Activated CD4-positive, alpha-beta T cell treated with anti-CD3 and anti-CD28 coated beads for 36 hours (primary cell): ENCODE measurements at regions of chr1 and their contacts with region 1.

Region 1: DNA sequence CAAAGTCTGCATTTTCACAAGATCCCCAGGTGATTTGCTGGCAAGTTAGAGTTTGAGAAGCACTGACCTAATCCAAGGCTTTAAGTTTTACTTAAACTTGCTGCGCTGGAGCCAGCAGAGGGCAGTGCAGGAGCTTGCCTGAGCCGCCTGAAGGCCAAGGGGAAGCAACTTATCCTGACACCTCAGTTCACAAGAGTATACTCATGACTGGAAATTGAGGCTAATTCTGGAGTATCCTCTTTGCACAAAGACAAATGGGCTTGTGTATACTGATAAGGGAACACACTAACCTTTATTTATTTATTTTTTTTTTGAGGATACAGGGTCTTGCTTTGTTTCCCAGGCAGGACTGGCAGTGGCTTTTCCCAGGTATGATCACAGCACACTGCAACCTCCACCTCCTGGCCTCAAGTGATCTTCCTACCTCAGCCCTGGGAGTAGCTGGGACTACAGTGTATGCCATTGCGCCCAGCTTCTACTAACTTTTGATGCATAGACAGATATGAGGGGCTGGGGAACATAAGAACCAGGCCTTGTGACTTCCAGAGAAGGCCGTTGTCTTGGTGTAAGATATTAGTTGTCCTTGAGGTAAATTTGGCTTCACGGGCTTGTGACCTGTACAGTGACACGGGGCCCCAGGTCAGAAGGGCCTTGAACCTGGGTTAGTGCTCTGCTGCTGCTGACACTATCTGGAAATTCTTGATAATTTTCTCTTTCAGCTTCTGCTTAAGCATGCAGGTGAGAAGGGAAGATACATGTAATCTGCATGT is 29.0 kb upstream of the SLAMF1 start:
- DNase-seq: peak; percentile 89
- ATAC-seq: peak; percentile 70
- H3K4me3 Mint-ChIP-seq: peak overlapping the region; percentile 26
- H3K27ac Mint-ChIP-seq: peak overlapping the region; percentile 48
- H3K4me1 Mint-ChIP-seq: peaks cover 42% of the 10 kb centered on the region
- H3K27me3 Mint-ChIP-seq: no peaks in the 10 kb centered on the region

Region 2: DNA sequence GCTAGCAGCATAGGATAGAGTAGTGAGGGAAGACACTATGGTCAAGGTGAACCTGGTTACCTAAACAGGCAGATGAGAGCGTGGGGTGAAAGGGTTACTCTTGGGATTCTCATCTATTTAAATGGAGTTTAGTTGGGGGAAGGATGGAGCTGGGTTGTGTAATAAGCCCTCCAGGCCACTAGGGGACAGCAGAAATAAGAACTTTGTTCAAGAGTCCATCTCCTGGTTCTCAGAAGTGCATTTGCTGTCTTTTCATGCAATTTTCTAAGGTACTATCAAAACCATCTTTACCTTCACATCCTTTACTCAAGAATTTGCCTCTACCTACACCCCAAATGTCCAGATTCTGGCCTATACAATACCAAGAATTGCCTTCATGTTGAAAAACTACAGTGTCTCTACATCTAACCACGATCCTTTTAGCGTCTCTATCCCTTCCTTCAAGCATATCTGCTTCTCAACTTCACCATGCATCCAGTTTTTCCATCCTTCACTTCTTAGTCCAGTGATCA is 57.0 kb before region 1 on chr1:
- CTCF ChIA-PET with region 1: interaction called, 65 read pairs
- POLR2A ChIA-PET with region 1: interaction called, 6 read pairs
- intact Hi-C with region 1: loop called (anchors 1 to 2 kb)
- DNase-seq: peak; percentile 65
- ATAC-seq: no peak
- H3K4me3 Mint-ChIP-seq: no peak overlapping the region
- H3K27ac Mint-ChIP-seq: peak overlapping the region; percentile 71
- H3K4me1 Mint-ChIP-seq: peaks cover 60% of the 10 kb centered on the region
- H3K27me3 Mint-ChIP-seq: no peaks in the 10 kb centered on the region

Region 3: DNA sequence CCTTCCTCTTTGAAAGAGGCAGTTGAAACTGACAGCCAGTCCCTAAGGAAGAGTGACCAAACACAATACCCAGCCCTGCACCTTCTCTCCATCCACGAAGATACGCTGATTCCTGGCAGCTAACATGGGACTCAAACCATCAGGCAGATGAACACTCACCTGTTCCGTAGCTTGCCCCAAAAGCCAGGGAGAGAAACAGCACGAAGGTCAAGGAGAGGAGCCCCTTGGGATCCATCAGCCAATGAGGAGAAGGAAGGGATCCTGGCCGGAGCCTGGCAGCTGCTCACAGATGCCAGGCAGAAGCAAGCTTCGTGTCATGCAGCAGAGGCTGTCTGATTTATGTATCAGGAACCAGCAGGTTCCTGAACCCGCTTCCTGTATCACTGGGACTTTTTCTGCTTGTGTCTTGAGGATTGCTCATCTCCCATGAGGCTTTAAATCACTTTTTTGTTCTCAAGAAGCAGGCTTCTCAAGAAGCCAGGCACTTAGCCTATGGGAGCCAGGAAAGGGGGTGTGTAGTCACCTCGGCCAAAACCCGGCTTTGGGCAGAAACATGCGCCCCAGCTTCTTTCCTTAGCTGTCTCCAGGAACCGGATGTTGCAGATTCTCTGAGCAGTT is 29.0 kb before region 1 on chr1 and contains the start of gene SLAMF1:
- CTCF ChIA-PET with region 1: interaction called, 61 read pairs
- POLR2A ChIA-PET with region 1: interaction called, 9 read pairs
- intact Hi-C with region 1: loop called (anchors 1 to 2 kb)
- DNase-seq: peak; percentile 81
- ATAC-seq: peak; percentile 81
- H3K4me3 Mint-ChIP-seq: peak within 1 kb of the TSS; percentile 93
- H3K27ac Mint-ChIP-seq: peak within 1 kb of the TSS; percentile 92
- H3K4me1 Mint-ChIP-seq: peaks cover 56% of the 10 kb centered on the region
- H3K27me3 Mint-ChIP-seq: no peaks in the 10 kb centered on the region
- total RNA-seq, gene SLAMF1: 103 to 108 TPM

Region 4: DNA sequence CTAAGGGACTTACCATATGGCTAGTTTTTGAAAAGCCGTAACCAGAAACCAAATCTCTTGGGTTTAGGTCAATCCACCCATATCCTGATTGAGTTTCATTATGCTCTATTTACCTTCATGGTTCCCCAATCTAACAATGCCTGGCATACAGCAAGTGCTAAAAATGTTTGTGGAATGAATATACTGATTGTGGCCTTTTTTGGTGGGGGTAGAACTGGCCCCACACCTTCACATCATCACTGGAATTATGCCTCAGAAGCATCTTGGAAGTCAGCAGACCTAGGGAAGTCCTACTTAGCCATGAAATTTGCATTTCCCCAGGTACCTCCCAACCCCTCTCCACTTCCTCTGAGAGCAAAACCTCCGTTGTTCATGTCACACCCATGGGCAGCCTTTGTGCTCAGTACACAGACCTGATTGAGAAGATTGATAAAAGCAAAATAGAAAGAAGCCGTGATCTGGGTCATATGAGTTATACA is 11.2 kb before region 1 on chr1:
- CTCF ChIA-PET with region 1: interaction called, 18 read pairs
- POLR2A ChIA-PET with region 1: interaction called, 4 read pairs
- intact Hi-C with region 1: no loop called
- DNase-seq: peak; percentile 55
- ATAC-seq: peak; percentile 79
- H3K4me3 Mint-ChIP-seq: peak overlapping the region; percentile 40
- H3K27ac Mint-ChIP-seq: peak overlapping the region; percentile 89
- H3K4me1 Mint-ChIP-seq: peaks cover 70% of the 10 kb centered on the region
- H3K27me3 Mint-ChIP-seq: no peaks in the 10 kb centered on the region

Region 5: GRCh38 chr1:160711602-160712311 is 35.9 kb after region 1 on chr1 and contains the start of gene CD48:
- CTCF ChIA-PET with region 1: interaction called, 59 read pairs
- POLR2A ChIA-PET with region 1: no interaction called
- intact Hi-C with region 1: loop called (anchors 1 to 5 kb)
- DNase-seq: peak; percentile 70
- ATAC-seq: peak; percentile 40
- H3K4me3 Mint-ChIP-seq: no peak within 1 kb of the TSS
- H3K27ac Mint-ChIP-seq: no peak within 1 kb of the TSS
- H3K4me1 Mint-ChIP-seq: peaks cover 34% of the 10 kb centered on the region
- H3K27me3 Mint-ChIP-seq: no peaks in the 10 kb centered on the region
- total RNA-seq, gene CD48: 180 to 217 TPM

Region 6: GRCh38 chr1:160777486-160778089 is 101.8 kb after region 1 on chr1:
- CTCF ChIA-PET with region 1: interaction called, 49 read pairs
- POLR2A ChIA-PET with region 1: no interaction called
- intact Hi-C with region 1: no loop called
- DNase-seq: peak; percentile 64
- ATAC-seq: peak; percentile 38
- H3K4me3 Mint-ChIP-seq: no peak overlapping the region
- H3K27ac Mint-ChIP-seq: peak overlapping the region; percentile 5
- H3K4me1 Mint-ChIP-seq: peaks cover 50% of the 10 kb centered on the region
- H3K27me3 Mint-ChIP-seq: no peaks in the 10 kb centered on the region

Region 7: DNA sequence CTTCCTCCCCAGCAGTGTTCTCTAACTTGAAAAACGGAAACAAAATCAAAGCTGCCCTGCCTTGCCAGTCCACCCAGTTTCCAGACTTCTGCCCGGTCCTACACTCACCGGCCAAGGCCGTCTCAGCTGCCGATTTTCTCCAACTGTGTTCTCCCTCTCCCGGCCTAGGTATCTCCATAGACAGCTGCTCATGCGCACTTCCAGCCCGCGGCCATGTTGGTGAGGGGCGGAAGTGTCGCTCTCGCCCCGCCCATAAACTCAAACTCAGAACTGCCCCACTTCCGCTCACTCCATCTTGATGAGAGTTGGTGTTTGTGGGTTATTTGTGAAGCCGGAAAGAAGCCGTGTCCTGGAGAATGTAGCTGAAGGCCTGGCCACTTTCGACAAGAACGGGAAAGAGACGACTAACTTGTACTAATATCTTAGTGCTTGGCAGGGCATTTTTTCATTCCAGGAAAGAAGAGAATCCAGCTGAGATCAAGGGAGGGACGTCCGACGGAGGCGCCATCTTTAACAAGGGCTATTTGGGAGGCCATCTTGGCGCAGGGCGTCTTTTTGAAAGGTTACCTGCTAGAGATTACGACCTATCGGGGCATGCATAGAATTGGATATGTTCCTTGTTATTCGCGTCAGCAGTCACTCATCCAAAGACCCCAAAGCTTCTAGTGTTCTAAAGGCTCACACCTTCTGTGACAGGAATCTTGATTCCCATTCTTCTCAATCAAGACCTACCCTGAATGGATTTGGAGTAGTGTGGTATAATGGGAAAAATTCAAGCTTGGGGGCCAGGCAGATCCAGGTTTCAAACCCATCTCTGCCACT is 370.1 kb after region 1 on chr1 and contains the start of gene USF1:
- CTCF ChIA-PET with region 1: no interaction called
- POLR2A ChIA-PET with region 1: no interaction called
- intact Hi-C with region 1: no loop called
- DNase-seq: peak; percentile 96
- ATAC-seq: peak; percentile 86
- H3K4me3 Mint-ChIP-seq: peak within 1 kb of the TSS; percentile 81
- H3K27ac Mint-ChIP-seq: peak within 1 kb of the TSS; percentile 99
- H3K4me1 Mint-ChIP-seq: peaks cover 32% of the 10 kb centered on the region
- H3K27me3 Mint-ChIP-seq: no peaks in the 10 kb centered on the region
- total RNA-seq, gene USF1: 34.5 to 42.8 TPM

Region 8: DNA sequence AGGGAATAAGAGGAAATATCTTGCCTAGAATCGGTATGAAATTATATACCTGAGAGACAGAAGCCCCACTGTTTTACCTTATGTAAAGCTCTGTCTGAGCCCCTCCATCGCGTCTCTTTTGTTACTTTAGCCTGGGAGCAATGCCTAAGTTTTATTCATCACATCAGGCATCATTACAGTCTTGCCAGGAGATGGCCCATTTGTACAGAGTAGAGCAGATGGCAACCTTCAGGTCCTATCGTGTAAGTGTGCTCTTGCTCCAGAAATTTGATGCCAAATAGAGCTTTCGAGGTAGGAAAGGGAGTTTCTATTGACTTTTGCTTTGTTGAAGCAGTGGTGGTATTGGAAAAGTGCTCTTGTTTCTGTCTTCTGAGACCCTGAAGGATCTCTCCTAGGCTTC is 667.0 kb after region 1 on chr1:
- CTCF ChIA-PET with region 1: no interaction called
- POLR2A ChIA-PET with region 1: interaction called, 11 read pairs
- intact Hi-C with region 1: no loop called
- DNase-seq: no peak
- ATAC-seq: no peak
- H3K4me3 Mint-ChIP-seq: no peak overlapping the region
- H3K27ac Mint-ChIP-seq: no peak overlapping the region
- H3K4me1 Mint-ChIP-seq: peaks cover 6% of the 10 kb centered on the region
- H3K27me3 Mint-ChIP-seq: no peaks in the 10 kb centered on the region